SK-N-SH (cell line): ENCODE measurements at regions of chr2 and their contacts with region 1.

Region 1: DNA sequence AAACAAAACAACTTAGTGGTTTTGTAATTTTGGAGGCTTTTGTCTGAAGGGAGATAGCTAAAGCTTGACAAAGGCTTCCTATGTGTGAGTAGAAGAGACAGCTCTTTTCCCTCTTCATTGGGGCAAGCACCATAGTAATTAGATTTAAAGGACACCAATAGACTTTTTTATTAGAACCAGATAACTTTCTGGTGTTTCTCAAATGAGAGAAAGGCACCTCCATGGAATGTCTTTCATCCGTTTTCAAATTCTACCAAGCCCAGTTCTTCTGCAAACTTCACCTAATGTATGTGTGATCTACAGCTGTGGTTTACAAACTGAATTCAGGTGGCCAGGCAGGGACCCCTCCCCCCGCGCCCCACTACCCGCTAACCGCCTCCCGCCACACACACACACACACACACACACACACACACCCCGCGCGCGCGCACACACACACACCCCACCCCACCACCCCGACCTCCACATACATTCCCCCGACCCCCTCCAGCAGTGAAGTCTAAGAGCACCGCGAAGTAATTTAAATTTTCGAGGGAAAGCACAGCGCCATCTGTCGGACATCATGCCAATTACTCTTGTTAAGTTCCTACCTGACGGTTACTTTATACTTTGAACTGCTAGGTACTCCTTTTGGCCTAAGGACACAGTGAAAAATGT is 31.6 kb upstream of the PPP1R1C start:
- DNase-seq: peak; percentile 67
- H3K4me3 ChIP-seq: peak overlapping the region; percentile 20 to 42
- H3K27ac ChIP-seq: peak overlapping the region; percentile 37 to 60; a peak in 2 of 4 replicates
- H3K4me1 ChIP-seq: peaks cover 4 to 12% of the 10 kb centered on the region in 2 experiments; a peak in 2 of 4 replicates
- H3K27me3 ChIP-seq: no peaks in the 10 kb centered on the region
- CTCF ChIP-seq: peak; percentile 65
- EP300 ChIP-seq: peak in 1 of 2 experiments; percentile 69; a peak in 2 of 4 replicates
- RAD21 ChIP-seq: peak; percentile 42

Region 2: GRCh38 chr2:181850936-181851560 is 103.0 kb before region 1 on chr2:
- CTCF ChIA-PET with region 1: no interaction called
- POLR2A ChIA-PET with region 1: no interaction called
- DNase-seq: no peak
- H3K4me3 ChIP-seq: no peak overlapping the region
- H3K27ac ChIP-seq: no peak overlapping the region
- H3K4me1 ChIP-seq: peaks cover 0 to 9% of the 10 kb centered on the region in 2 experiments; a peak in 2 of 4 replicates
- H3K27me3 ChIP-seq: no peaks in the 10 kb centered on the region
- CTCF ChIP-seq: no peak
- EP300 ChIP-seq: no peak
- RAD21 ChIP-seq: no peak

Region 3: GRCh38 chr2:181977661-181978350 is 23.8 kb after region 1 on chr2:
- CTCF ChIA-PET with region 1: interaction called, 11 read pairs
- POLR2A ChIA-PET with region 1: no interaction called
- DNase-seq: no peak
- H3K4me3 ChIP-seq: no peak overlapping the region
- H3K27ac ChIP-seq: no peak overlapping the region
- H3K4me1 ChIP-seq: no peaks in the 10 kb centered on the region
- H3K27me3 ChIP-seq: no peaks in the 10 kb centered on the region
- CTCF ChIP-seq: no peak
- EP300 ChIP-seq: no peak
- RAD21 ChIP-seq: no peak

Region 4: DNA sequence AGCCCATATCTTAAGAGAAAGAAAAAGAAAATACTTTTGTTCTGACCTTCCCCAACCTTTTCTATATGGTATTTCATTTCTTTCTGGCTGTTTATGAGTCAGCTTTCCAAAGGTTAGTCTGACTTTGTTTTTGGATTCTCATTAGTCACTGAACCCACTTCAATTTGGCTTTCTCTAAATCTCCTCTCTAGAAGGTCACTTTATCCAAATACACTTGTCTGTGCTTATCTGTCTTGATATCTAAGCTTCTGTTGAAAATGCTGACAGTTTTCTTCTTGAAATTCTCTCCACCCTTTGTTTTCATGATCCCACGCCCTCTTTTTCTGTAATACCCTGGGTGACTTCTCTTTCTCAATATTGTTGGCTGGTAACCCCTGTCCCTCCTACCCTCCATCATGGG is 66.7 kb after region 1 on chr2:
- CTCF ChIA-PET with region 1: no interaction called
- POLR2A ChIA-PET with region 1: no interaction called
- DNase-seq: no peak
- H3K4me3 ChIP-seq: no peak overlapping the region
- H3K27ac ChIP-seq: peak overlapping the region in 1 of 2 experiments; percentile 35; a peak in 1 of 4 replicates
- H3K4me1 ChIP-seq: no peaks in the 10 kb centered on the region; a peak in 1 of 4 replicates
- H3K27me3 ChIP-seq: no peaks in the 10 kb centered on the region
- CTCF ChIP-seq: no peak
- EP300 ChIP-seq: no peak
- RAD21 ChIP-seq: no peak